ENCODE measurements at regions of chr12 and their contacts with region 1.

Region 1: GRCh38 chr12:21169878-21170472 is 39.0 kb downstream of the SLCO1B1 start:
- DNase-seq: peak; percentile 40
- H3K4me3 Mint-ChIP-seq: no peak overlapping the region
- H3K27ac Mint-ChIP-seq: no peak overlapping the region
- H3K4me1 Mint-ChIP-seq: no peaks in the 10 kb centered on the region
- H3K27me3 Mint-ChIP-seq: peaks cover 2% of the 10 kb centered on the region

Region 2: DNA sequence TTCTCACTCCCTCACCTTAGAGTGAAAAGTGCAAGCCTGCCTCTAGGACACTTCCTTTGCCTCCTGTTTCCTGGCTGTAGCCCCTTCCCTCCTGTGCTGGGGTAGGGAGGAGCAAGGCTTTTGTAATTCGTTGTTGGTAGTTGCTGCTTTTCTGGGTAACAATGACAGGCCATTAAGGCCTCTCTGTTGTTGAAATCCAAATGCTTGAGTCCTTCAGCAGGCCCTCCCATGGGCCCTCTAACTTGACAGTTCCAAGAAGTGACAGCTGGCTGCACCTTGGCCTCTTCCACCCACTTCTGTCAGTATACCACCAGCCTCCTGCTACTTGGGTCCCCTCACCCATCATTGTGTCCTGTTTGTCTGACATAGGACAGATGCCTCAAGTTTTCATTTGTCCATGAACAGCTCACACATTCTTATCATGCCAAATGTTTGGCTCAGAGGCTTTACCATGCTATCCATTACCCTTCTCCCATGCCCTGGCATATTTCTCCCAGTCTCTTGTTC is 905.3 kb before region 1 on chr12:
- CTCF ChIA-PET with region 1: no interaction called
- POLR2A ChIA-PET with region 1: no interaction called
- intact Hi-C with region 1: no loop called
- DNase-seq: no peak
- H3K4me3 Mint-ChIP-seq: no peak overlapping the region
- H3K27ac Mint-ChIP-seq: no peak overlapping the region
- H3K4me1 Mint-ChIP-seq: no peaks in the 10 kb centered on the region
- H3K27me3 Mint-ChIP-seq: no peaks in the 10 kb centered on the region

Region 3: DNA sequence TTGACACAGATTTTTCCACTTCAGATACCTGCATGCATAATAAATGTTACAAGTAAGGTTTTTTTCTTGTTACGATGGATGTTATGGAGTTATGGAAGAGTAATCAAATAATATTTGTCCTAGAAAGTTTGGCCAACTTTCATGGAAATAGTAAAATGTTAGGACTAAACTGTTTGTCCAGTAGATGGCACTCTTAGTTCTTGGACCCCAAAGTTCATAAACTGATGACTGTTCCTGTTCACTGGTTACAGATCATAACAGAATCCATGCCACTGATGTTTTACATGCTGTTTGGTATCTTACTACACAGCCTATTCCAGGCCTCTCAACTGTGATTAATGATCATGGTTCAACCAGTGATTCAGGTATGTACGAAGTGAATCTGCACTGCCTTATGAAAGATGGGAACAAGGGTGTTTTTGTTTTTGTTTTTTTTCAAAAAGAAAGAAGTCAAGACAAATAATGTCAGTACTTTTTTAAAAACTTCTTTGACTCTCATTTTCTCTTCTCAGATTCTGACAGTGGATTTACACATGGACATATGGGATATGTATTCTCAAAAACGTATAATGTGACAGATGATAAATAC is 523.6 kb before region 1 on chr12:
- CTCF ChIA-PET with region 1: no interaction called
- POLR2A ChIA-PET with region 1: no interaction called
- intact Hi-C with region 1: loop called (anchors 5 kb)
- DNase-seq: no peak
- H3K4me3 Mint-ChIP-seq: no peak overlapping the region
- H3K27ac Mint-ChIP-seq: no peak overlapping the region
- H3K4me1 Mint-ChIP-seq: no peaks in the 10 kb centered on the region
- H3K27me3 Mint-ChIP-seq: no peaks in the 10 kb centered on the region

Region 4: DNA sequence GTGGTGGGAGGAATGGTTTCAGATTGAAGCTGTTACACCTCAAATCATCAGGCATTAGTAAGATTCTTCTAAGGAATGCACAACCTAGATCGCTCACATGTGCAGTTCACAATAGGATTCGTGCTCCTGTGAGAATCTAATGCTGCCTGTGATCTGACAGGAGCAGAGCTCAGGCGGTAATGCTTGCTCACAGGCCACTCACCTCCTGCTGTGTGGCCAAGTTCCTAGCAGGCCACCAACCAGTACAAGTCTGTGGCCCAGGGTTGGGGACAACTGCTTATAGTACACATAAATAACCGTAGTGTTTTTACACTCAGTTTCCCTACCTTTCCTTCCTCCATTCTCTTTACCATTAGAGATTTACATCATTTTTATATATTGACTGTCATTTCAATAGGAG is 238.1 kb before region 1 on chr12:
- CTCF ChIA-PET with region 1: no interaction called
- POLR2A ChIA-PET with region 1: no interaction called
- intact Hi-C with region 1: no loop called
- DNase-seq: no peak
- H3K4me3 Mint-ChIP-seq: no peak overlapping the region
- H3K27ac Mint-ChIP-seq: no peak overlapping the region
- H3K4me1 Mint-ChIP-seq: no peaks in the 10 kb centered on the region
- H3K27me3 Mint-ChIP-seq: no peaks in the 10 kb centered on the region

Region 5: GRCh38 chr12:20946732-20947131 is 223.2 kb before region 1 on chr12:
- CTCF ChIA-PET with region 1: interaction called, 3 read pairs
- POLR2A ChIA-PET with region 1: no interaction called
- intact Hi-C with region 1: loop called (anchors 2 kb)
- DNase-seq: peak; percentile 14
- H3K4me3 Mint-ChIP-seq: no peak overlapping the region
- H3K27ac Mint-ChIP-seq: no peak overlapping the region
- H3K4me1 Mint-ChIP-seq: no peaks in the 10 kb centered on the region
- H3K27me3 Mint-ChIP-seq: no peaks in the 10 kb centered on the region